Posterior cingulate gyrus (tissue), 11 donors: ENCODE measurements at regions of chr9 and their contacts with region 1.

Region 1: GRCh38 chr9:35277628-35278359 is 116.0 kb downstream of the UNC13B start:
- DNase-seq: no peak

Region 2: GRCh38 chr9:35161713-35162604 is 115.8 kb before region 1 on chr9 and contains the start of gene UNC13B:
- intact Hi-C with region 1: no loop called
- DNase-seq: peak; percentile 90 to 99 (median 94)

Region 3: GRCh38 chr9:35481347-35481975 is 203.7 kb after region 1 on chr9:
- intact Hi-C with region 1: loop called (anchors 5 kb)
- DNase-seq: peak in 1 of 10 donors; percentile 13